ENCODE measurements at regions of chr19 and their contacts with region 1.

Region 1: GRCh38 chr19:48683349-48683748 is 10.5 kb upstream of the NTN5 start:
- DNase-seq: no peak
- H3K4me3 ChIP-seq: no peak overlapping the region
- H3K27ac ChIP-seq: no peak overlapping the region
- H3K4me1 ChIP-seq: no peaks in the 10 kb centered on the region
- H3K27me3 ChIP-seq: no peaks in the 10 kb centered on the region
- CTCF ChIP-seq: no peak

Region 2: DNA sequence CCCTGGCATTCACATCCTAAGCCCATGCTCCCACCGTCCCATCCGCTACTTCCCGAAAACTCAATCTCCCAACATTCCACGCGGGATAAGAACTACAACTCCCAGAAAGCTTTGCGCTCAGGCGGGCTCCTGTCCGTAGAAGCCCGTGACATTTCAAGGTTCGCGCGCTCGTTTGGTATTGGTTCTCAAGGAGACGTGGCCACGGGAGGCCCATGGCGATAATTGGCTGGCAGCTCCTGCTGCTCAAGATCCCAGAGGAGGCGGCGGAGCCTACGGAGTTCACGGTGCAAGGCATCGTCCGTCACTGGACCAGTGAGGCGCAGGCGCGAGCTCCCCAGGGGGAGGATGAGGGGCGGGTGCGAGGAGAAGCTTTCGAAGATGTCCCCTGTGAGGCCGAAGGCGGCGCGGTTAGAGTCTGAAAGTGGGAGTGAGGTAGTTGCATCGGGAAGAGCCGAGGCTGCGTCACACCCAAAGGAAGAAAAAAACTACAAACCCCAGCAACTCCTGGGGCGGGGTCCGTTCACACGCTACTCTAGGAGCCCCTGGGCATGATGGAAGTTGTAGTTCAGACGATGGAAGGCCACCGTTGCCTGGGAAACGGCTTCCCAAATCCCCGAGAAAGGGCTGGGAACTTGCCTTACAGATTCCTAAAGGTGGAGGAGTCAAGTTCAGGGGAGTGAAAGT is 37.4 kb after region 1 on chr19:
- CTCF ChIA-PET with region 1: no interaction called
- dilution Hi-C with region 1: loop called (anchors 5 kb)
- in situ Hi-C with region 1: no loop called
- intact Hi-C with region 1: no loop called
- DNase-seq: peak; percentile 98
- H3K4me3 ChIP-seq: peak overlapping the region; percentile 61 to 81 (median 61)
- H3K27ac ChIP-seq: peak overlapping the region; percentile 68
- H3K4me1 ChIP-seq: peaks cover 16% of the 10 kb centered on the region
- H3K27me3 ChIP-seq: no peaks in the 10 kb centered on the region
- CTCF ChIP-seq: no peak

Region 3: GRCh38 chr19:48768994-48769713 is 85.8 kb after region 1 on chr19:
- CTCF ChIA-PET with region 1: no interaction called
- dilution Hi-C with region 1: loop called (anchors 5 kb)
- in situ Hi-C with region 1: no loop called
- intact Hi-C with region 1: no loop called
- DNase-seq: no peak
- H3K4me3 ChIP-seq: no peak overlapping the region
- H3K27ac ChIP-seq: no peak overlapping the region
- H3K4me1 ChIP-seq: peaks cover 6% of the 10 kb centered on the region
- H3K27me3 ChIP-seq: no peaks in the 10 kb centered on the region
- CTCF ChIP-seq: no peak

Measured in mammary epithelial cell (primary cell).